Activated CD4-positive, alpha-beta T cell treated with anti-CD3 and anti-CD28 coated beads for 36 hours (primary cell): ENCODE measurements at regions of chr6 and their contacts with region 1.

Region 1: DNA sequence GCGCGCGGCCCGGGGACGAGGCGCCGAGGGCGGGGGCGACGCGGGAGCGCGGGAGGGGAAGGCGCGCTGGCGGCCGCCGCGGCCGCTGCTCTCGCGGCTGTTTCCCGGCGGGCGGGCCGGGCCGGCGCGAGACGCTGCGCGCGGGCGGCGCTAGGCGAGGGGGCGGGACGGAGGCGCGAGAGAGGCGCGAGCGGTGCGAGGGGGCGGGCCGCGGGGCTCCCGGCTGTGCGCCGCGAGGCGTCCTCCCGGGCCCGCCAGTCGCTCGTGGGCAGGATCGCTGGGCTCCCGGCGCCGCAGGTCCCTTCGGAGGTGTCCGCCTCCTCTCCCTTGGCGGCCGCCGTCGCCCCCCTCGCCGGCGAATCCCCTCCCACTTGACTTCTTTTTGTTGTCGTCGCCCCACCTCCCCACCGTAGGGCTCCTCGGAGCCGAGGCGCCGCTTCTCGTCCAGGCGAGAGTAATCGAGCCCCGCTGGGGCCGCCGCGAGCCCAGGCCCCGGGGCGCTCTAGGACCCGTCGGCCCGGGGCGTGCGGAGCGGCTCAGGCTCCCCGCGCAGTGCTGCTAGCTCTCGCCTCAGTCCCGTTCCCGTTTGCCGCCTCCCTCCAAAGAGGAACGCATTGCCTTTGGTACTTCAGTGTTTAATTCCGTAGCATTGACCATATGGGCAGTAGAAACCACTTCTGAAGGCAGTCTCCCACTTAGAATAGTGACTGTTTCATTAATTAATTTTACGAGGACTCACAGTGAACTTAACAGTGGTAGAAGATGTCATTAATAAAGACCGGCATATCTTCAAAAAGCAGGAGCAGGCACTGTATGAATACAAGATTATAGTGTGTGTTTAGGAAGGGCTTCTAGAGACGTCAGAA is at the start of gene RANBP9:
- DNase-seq: peak; percentile 92
- ATAC-seq: peak; percentile 78
- H3K4me3 Mint-ChIP-seq: peak within 1 kb of the TSS; percentile 85
- H3K27ac Mint-ChIP-seq: peak within 1 kb of the TSS; percentile 96
- H3K4me1 Mint-ChIP-seq: peaks cover 49% of the 10 kb centered on the region
- H3K27me3 Mint-ChIP-seq: no peaks in the 10 kb centered on the region
- total RNA-seq, gene RANBP9: 50.8 to 65.0 TPM

Region 2: GRCh38 chr6:13203145-13203544 is 508.8 kb before region 1 on chr6:
- CTCF ChIA-PET with region 1: no interaction called
- POLR2A ChIA-PET with region 1: no interaction called
- intact Hi-C with region 1: no loop called
- DNase-seq: no peak
- ATAC-seq: no peak
- H3K4me3 Mint-ChIP-seq: no peak overlapping the region
- H3K27ac Mint-ChIP-seq: no peak overlapping the region
- H3K4me1 Mint-ChIP-seq: no peaks in the 10 kb centered on the region
- H3K27me3 Mint-ChIP-seq: peaks cover 2% of the 10 kb centered on the region

Region 3: GRCh38 chr6:13355043-13355951 is 356.7 kb before region 1 on chr6:
- CTCF ChIA-PET with region 1: no interaction called
- POLR2A ChIA-PET with region 1: no interaction called
- intact Hi-C with region 1: loop called in 1 of 2 experiments (anchors 5 kb)
- DNase-seq: peak; percentile 53
- ATAC-seq: peak; percentile 73
- H3K4me3 Mint-ChIP-seq: peak overlapping the region; percentile 68
- H3K27ac Mint-ChIP-seq: peak overlapping the region; percentile 99
- H3K4me1 Mint-ChIP-seq: peaks cover 48% of the 10 kb centered on the region
- H3K27me3 Mint-ChIP-seq: no peaks in the 10 kb centered on the region

Region 4: GRCh38 chr6:13466304-13467215 is 245.4 kb before region 1 on chr6:
- CTCF ChIA-PET with region 1: no interaction called
- POLR2A ChIA-PET with region 1: interaction called, 3 read pairs
- intact Hi-C with region 1: loop called in 1 of 2 experiments (anchors 1 kb)
- DNase-seq: peak; percentile 78
- ATAC-seq: peak; percentile 91
- H3K4me3 Mint-ChIP-seq: peak overlapping the region; percentile 44
- H3K27ac Mint-ChIP-seq: peak overlapping the region; percentile 87
- H3K4me1 Mint-ChIP-seq: peaks cover 71% of the 10 kb centered on the region
- H3K27me3 Mint-ChIP-seq: no peaks in the 10 kb centered on the region

Region 5: GRCh38 chr6:13614926-13615798 is 96.8 kb before region 1 on chr6 and contains the start of gene NOL7:
- CTCF ChIA-PET with region 1: interaction called, 11 read pairs
- POLR2A ChIA-PET with region 1: interaction called, 6 read pairs
- intact Hi-C with region 1: loop called (anchors 1 kb)
- DNase-seq: peak; percentile 99
- ATAC-seq: peak; percentile 92
- H3K4me3 Mint-ChIP-seq: peak within 1 kb of the TSS; percentile 92
- H3K27ac Mint-ChIP-seq: peak within 1 kb of the TSS; percentile 90
- H3K4me1 Mint-ChIP-seq: peaks cover 44% of the 10 kb centered on the region
- H3K27me3 Mint-ChIP-seq: no peaks in the 10 kb centered on the region
- total RNA-seq, gene NOL7: 92.8 to 97.3 TPM

Region 6: GRCh38 chr6:13696226-13696625 is 15.7 kb before region 1 on chr6:
- CTCF ChIA-PET with region 1: interaction called, 16 read pairs
- POLR2A ChIA-PET with region 1: interaction called, 13 read pairs
- intact Hi-C with region 1: loop called in 1 of 2 experiments (anchors 1 kb)
- DNase-seq: no peak
- ATAC-seq: no peak
- H3K4me3 Mint-ChIP-seq: no peak overlapping the region
- H3K27ac Mint-ChIP-seq: peak overlapping the region; percentile 69
- H3K4me1 Mint-ChIP-seq: peaks cover 71% of the 10 kb centered on the region
- H3K27me3 Mint-ChIP-seq: no peaks in the 10 kb centered on the region

Region 7: DNA sequence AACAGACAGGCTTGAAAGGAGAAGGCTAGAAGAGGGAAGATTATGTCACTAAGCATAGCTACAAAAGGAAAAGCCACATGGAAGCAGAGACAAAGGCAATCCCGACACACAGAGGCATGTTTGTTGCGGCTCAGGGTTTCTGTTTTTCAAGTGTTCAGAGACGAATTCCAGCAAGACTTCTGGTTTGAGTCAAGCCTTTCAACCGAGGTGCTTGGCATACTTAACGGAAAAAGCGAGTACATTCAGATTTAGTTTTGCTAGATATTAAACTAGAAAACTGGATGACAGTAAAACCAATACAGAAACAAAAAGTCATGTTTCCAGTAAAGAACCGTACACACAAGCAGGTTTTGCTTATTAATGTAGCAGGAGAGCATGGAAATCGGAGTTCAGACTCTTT is 75.2 kb after region 1 on chr6:
- CTCF ChIA-PET with region 1: interaction called, 3 read pairs
- POLR2A ChIA-PET with region 1: no interaction called
- intact Hi-C with region 1: loop called (anchors 1 to 5 kb)
- DNase-seq: peak; percentile 61
- ATAC-seq: peak; percentile 73
- H3K4me3 Mint-ChIP-seq: peak overlapping the region; percentile 7
- H3K27ac Mint-ChIP-seq: peak overlapping the region; percentile 88
- H3K4me1 Mint-ChIP-seq: peaks cover 37% of the 10 kb centered on the region
- H3K27me3 Mint-ChIP-seq: no peaks in the 10 kb centered on the region